Endothelial cell of umbilical vein (primary cell): ENCODE measurements at regions of chr18 and their contacts with region 1.

Region 1: GRCh38 chr18:13216092-13216582 is 2.4 kb upstream of the LDLRAD4 start:
- DNase-seq: peak; percentile 81
- H3K4me3 ChIP-seq: no peak overlapping the region
- H3K27ac ChIP-seq: no peak overlapping the region
- H3K4me1 ChIP-seq: peaks cover 6% of the 10 kb centered on the region
- H3K27me3 ChIP-seq: peaks cover 28 to 62% of the 10 kb centered on the region in 2 experiments
- CTCF ChIP-seq: peak; percentile 66 to 80
- POLR2A ChIP-seq: no peak

Region 2: GRCh38 chr18:13324870-13325269 is 108.7 kb after region 1 on chr18:
- CTCF ChIA-PET with region 1: no interaction called
- POLR2A ChIA-PET with region 1: no interaction called
- dilution Hi-C with region 1: no loop called
- intact Hi-C with region 1: no loop called
- DNase-seq: no peak
- H3K4me3 ChIP-seq: no peak overlapping the region
- H3K27ac ChIP-seq: no peak overlapping the region
- H3K4me1 ChIP-seq: no peaks in the 10 kb centered on the region
- H3K27me3 ChIP-seq: no peaks in the 10 kb centered on the region
- CTCF ChIP-seq: no peak
- POLR2A ChIP-seq: no peak

Region 3: GRCh38 chr18:13375302-13376255 is 159.4 kb after region 1 on chr18:
- CTCF ChIA-PET with region 1: interaction called, 9 read pairs
- POLR2A ChIA-PET with region 1: no interaction called
- dilution Hi-C with region 1: no loop called
- intact Hi-C with region 1: loop called (anchors 2 kb)
- DNase-seq: peak; percentile 97
- H3K4me3 ChIP-seq: peak overlapping the region in 1 of 3 experiments; percentile 20
- H3K27ac ChIP-seq: peak overlapping the region; percentile 90
- H3K4me1 ChIP-seq: peaks cover 23% of the 10 kb centered on the region
- H3K27me3 ChIP-seq: no peaks in the 10 kb centered on the region
- CTCF ChIP-seq: no peak
- POLR2A ChIP-seq: no peak

Region 4: GRCh38 chr18:13435596-13436327 is 219.6 kb after region 1 on chr18:
- CTCF ChIA-PET with region 1: interaction called, 5 read pairs
- POLR2A ChIA-PET with region 1: no interaction called
- dilution Hi-C with region 1: no loop called
- intact Hi-C with region 1: loop called (anchors 1 kb)
- DNase-seq: peak; percentile 91
- H3K4me3 ChIP-seq: no peak overlapping the region
- H3K27ac ChIP-seq: peak overlapping the region; percentile 90
- H3K4me1 ChIP-seq: peaks cover 35% of the 10 kb centered on the region
- H3K27me3 ChIP-seq: no peaks in the 10 kb centered on the region
- CTCF ChIP-seq: no peak
- POLR2A ChIP-seq: no peak

Region 5: DNA sequence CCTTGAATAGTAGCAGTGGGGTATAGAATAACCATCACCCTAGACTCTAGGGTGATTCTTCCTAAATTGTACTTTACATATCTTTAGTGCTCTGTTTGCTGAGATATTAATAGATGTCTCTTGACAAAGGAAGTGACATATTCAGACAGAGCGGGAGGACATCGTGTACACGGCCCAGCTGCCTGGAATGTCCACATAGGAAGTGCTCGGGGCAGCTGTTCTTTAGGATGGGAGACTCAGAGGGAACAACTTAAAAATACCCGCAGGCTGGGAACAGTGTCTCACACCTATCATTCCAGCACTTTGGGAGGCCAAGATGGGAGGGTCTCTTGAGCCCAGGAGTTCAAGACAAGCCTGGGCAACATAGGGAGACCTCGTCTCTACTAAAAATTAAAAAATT is 304.2 kb after region 1 on chr18:
- CTCF ChIA-PET with region 1: interaction called, 195 read pairs
- POLR2A ChIA-PET with region 1: no interaction called
- dilution Hi-C with region 1: no loop called
- intact Hi-C with region 1: no loop called
- DNase-seq: no peak
- H3K4me3 ChIP-seq: no peak overlapping the region
- H3K27ac ChIP-seq: no peak overlapping the region
- H3K4me1 ChIP-seq: no peaks in the 10 kb centered on the region
- H3K27me3 ChIP-seq: no peaks in the 10 kb centered on the region
- CTCF ChIP-seq: no peak
- POLR2A ChIP-seq: no peak

Region 6: GRCh38 chr18:13629841-13630715 is 413.9 kb after region 1 on chr18:
- CTCF ChIA-PET with region 1: interaction called, 23 read pairs
- POLR2A ChIA-PET with region 1: no interaction called
- dilution Hi-C with region 1: no loop called
- intact Hi-C with region 1: loop called (anchors 1 kb)
- DNase-seq: peak; percentile 67
- H3K4me3 ChIP-seq: no peak overlapping the region
- H3K27ac ChIP-seq: no peak overlapping the region
- H3K4me1 ChIP-seq: no peaks in the 10 kb centered on the region
- H3K27me3 ChIP-seq: no peaks in the 10 kb centered on the region
- CTCF ChIP-seq: peak; percentile 63 to 68
- POLR2A ChIP-seq: no peak